OCI-LY7 (cell line): ENCODE measurements at regions of chr7 and their contacts with region 1.

Region 1: DNA sequence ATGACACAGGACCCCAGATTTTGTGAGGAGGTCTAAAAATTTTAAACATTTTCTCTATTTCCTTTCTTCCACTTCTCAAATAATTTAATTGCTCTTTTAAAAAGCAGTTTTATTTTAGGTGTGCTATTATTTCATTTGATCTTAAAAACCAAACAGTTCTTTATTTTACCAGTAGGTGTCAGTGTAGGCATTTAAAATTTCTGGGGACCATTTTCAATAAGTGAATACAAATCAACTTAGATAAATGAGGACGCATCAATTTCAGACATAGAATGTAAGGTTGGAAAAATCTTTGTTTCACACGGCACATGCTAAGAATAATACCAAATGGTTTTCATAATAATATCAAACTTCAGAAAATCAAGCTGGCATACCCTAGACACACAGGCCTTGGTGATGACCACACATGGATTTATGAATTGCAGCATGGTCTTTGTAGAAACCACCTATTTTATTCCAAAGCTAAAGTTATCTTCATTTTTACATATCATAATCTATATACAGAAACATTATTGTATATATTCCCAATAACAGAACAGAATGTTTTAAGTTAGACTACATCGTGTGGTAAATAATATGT is 127.6 kb upstream of the SLC26A5 start:
- DNase-seq: peak; percentile 24
- H3K4me3 ChIP-seq: no peak overlapping the region
- H3K27ac ChIP-seq: no peak overlapping the region
- H3K4me1 ChIP-seq: no peaks in the 10 kb centered on the region
- CTCF ChIP-seq: peak; percentile 93

Region 2: DNA sequence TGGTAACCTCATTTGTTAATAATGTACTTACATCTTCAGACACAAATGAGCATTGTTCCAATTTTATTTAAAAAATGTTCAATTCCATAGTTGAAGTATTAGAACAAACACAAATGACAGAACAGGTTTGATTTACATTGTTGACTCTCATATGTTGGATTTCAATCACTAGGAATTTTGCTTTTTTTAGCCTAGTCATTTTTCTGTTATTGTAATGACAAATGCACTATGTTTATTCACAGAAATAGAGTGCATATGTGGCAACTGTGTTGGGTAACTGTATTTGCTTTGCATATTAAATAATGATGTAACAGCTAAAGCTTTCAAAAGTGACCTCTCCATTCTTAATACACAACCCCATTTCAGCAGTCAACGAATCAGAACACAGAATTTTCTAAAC is 73.7 kb before region 1 on chr7:
- CTCF ChIA-PET with region 1: no interaction called
- POLR2A ChIA-PET with region 1: no interaction called
- intact Hi-C with region 1: no loop called
- DNase-seq: no peak
- H3K4me3 ChIP-seq: no peak overlapping the region
- H3K27ac ChIP-seq: no peak overlapping the region
- H3K4me1 ChIP-seq: no peaks in the 10 kb centered on the region
- CTCF ChIP-seq: no peak

Region 3: DNA sequence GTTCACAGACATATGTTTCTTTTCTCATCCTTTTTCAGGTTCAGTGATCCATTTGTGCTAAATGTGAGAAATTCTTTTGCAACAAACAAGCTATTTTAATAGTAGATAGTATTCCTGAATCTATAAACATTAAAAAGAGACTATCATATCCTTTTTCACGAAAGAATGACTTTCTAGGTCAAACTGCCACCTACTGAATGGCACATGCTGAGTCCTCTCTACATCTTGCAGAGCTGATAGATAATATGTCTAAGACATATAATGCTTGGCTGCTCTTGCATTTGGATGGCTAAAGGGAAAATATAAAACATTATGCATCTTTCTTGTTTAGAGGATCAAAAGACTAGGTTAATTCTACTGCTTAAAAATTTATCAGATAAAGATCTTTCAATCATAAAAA is 13.4 kb before region 1 on chr7:
- CTCF ChIA-PET with region 1: no interaction called
- POLR2A ChIA-PET with region 1: no interaction called
- intact Hi-C with region 1: no loop called
- DNase-seq: no peak
- H3K4me3 ChIP-seq: no peak overlapping the region
- H3K27ac ChIP-seq: no peak overlapping the region
- H3K4me1 ChIP-seq: no peaks in the 10 kb centered on the region
- CTCF ChIP-seq: no peak

Region 4: DNA sequence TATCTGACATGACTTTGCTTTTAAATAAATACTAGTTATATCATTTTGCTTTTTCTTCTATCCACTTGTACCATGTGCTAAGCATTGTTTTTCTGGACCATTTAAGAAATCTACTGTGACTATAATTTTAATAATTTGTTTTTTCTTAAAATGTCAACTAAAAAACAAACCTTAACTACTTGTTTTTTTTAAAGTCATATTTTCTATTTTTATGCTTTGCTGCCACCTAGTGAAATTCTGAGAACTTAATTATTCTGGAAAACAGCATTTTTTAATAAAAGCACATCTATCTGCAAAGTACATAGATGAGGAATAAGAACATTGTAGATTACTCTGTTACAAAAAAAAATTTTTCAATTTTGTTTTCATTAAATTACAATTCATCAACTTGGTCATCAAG is 586.8 kb after region 1 on chr7:
- CTCF ChIA-PET with region 1: no interaction called
- POLR2A ChIA-PET with region 1: no interaction called
- intact Hi-C with region 1: loop called (anchors 5 kb)
- DNase-seq: peak; percentile 13
- H3K4me3 ChIP-seq: no peak overlapping the region
- H3K27ac ChIP-seq: no peak overlapping the region
- H3K4me1 ChIP-seq: no peaks in the 10 kb centered on the region
- CTCF ChIP-seq: peak; percentile 79

Region 5: GRCh38 chr7:104231054-104232046 is 657.8 kb after region 1 on chr7:
- CTCF ChIA-PET with region 1: no interaction called
- POLR2A ChIA-PET with region 1: no interaction called
- intact Hi-C with region 1: loop called (anchors 10 kb)
- DNase-seq: peak; percentile 61
- H3K4me3 ChIP-seq: no peak overlapping the region
- H3K27ac ChIP-seq: no peak overlapping the region
- H3K4me1 ChIP-seq: no peaks in the 10 kb centered on the region
- CTCF ChIP-seq: peak; percentile 82

Region 6: DNA sequence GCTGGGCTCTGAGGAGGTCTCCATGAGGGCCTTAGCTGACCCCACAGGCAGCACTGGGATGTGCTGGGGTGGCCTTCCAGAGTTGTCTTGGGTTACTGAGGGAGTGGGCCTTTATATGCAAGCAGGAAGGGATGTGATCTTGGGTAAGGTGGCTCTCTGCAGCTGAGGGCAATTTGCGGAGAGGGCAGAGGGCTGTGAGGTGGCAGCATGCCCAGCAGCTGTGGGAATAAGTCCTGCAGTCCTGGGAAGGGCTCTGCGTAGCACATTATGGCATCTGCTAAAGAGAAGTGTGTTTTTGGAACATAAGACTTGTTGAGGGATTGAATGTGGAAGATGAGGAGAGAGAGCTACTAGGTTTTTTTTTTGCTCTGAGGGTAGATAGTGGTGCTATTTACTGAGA is 1340.9 kb after region 1 on chr7:
- CTCF ChIA-PET with region 1: no interaction called
- POLR2A ChIA-PET with region 1: no interaction called
- intact Hi-C with region 1: loop called (anchors 10 kb)
- DNase-seq: no peak
- H3K4me3 ChIP-seq: no peak overlapping the region
- H3K27ac ChIP-seq: no peak overlapping the region
- H3K4me1 ChIP-seq: peaks cover 4% of the 10 kb centered on the region
- CTCF ChIP-seq: no peak